A673 (cell line): ENCODE measurements at regions of chr10 and their contacts with region 1.

Region 1: GRCh38 chr10:105691811-105692210 is 1050.7 kb downstream of the SORCS3 start:
- DNase-seq: peak; percentile 62
- H3K4me3 ChIP-seq: no peak overlapping the region
- H3K27ac ChIP-seq: no peak overlapping the region
- H3K4me1 ChIP-seq: no peaks in the 10 kb centered on the region
- H3K27me3 ChIP-seq: peaks cover 10% of the 10 kb centered on the region
- CTCF ChIP-seq: peak; percentile 67

Region 2: GRCh38 chr10:104642658-104643302 is 1049.0 kb before region 1 on chr10:
- CTCF ChIA-PET with region 1: no interaction called
- POLR2A ChIA-PET with region 1: no interaction called
- intact Hi-C with region 1: loop called (anchors 10 kb)
- DNase-seq: peak; percentile 69
- H3K4me3 ChIP-seq: no peak overlapping the region
- H3K27ac ChIP-seq: no peak overlapping the region
- H3K4me1 ChIP-seq: peaks cover 7% of the 10 kb centered on the region
- H3K27me3 ChIP-seq: peaks cover 97% of the 10 kb centered on the region
- CTCF ChIP-seq: peak; percentile 61

Region 3: DNA sequence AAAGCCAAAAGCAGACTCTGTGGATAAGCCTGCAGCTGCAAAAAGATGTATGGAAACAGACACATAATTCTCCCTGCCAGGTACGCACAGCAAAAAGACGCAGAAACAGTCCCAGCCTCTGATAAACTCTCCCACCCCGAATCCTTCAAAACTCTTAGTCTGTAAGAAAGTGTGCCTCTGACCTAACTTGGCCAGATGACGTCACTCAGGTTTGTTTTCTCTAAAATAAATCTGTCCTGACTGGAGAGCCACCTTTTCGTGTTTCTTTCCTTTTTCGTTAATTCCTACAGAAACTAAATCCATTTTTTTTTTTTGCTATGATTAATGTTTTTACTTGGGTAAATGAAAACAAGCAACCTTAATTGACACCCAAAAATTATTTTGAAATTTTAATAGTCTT is 679.0 kb after region 1 on chr10:
- CTCF ChIA-PET with region 1: no interaction called
- POLR2A ChIA-PET with region 1: no interaction called
- intact Hi-C with region 1: no loop called
- DNase-seq: no peak
- H3K4me3 ChIP-seq: no peak overlapping the region
- H3K27ac ChIP-seq: no peak overlapping the region
- H3K4me1 ChIP-seq: no peaks in the 10 kb centered on the region
- H3K27me3 ChIP-seq: no peaks in the 10 kb centered on the region
- CTCF ChIP-seq: no peak